Heart left ventricle (tissue), 16 donors: ENCODE measurements at regions of chr1 and their contacts with region 1.

Region 1: DNA sequence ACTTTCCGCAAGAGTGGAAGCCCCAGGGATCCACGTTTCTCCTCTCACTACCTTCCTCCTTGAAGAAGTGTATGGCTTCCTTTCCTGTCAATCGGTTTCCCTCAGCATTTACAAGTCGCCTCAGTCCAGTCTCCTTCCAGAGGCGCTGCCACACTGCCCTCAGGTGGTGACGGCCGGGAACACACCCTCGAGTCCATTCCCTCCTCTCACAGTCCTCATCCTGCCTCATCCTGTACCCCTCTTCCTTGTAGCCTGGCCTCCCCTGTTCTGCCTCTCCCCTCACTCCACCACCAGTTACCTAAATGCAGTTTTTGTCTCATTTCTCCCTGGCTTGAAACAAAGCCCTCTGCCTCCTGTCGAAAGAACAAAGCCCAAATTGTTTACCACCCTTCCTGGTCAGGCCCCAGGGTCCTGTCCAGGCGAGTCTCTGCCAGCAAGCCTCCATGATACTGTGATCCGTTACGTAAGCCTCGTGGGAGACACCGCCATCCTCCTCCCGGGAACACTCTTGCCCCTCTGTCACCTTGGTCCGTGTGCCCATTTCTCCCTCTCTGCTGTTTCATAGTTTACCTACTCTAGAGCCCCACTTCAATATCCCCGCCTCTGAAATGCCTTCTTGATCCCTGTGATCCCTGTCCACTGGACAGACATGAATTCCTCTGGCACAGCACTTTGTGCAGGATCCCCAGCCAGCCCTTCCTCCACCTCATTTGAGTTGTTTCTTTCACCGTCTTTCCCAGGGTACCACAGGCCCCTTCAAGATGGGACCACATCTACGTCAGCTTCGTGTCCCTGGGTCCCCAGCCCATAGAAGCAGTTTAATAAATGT is 23.3 kb upstream of the LSM10 start:
- DNase-seq: peak; percentile 76 to 90 (median 86)
- ATAC-seq: peak; percentile 74 to 95 (median 92)
- H3K4me3 ChIP-seq: no peak overlapping the region
- H3K27ac ChIP-seq: peak overlapping the region in 1 of 12 donors; percentile 33
- H3K4me1 ChIP-seq: peaks cover 0 to 21% (median 8%) of the 10 kb centered on the region in 12 donors
- H3K27me3 ChIP-seq: no peaks in the 10 kb centered on the region
- CTCF ChIP-seq: peak; percentile 86 to 98 (median 93)
- POLR2A ChIP-seq: no peak

Region 2: DNA sequence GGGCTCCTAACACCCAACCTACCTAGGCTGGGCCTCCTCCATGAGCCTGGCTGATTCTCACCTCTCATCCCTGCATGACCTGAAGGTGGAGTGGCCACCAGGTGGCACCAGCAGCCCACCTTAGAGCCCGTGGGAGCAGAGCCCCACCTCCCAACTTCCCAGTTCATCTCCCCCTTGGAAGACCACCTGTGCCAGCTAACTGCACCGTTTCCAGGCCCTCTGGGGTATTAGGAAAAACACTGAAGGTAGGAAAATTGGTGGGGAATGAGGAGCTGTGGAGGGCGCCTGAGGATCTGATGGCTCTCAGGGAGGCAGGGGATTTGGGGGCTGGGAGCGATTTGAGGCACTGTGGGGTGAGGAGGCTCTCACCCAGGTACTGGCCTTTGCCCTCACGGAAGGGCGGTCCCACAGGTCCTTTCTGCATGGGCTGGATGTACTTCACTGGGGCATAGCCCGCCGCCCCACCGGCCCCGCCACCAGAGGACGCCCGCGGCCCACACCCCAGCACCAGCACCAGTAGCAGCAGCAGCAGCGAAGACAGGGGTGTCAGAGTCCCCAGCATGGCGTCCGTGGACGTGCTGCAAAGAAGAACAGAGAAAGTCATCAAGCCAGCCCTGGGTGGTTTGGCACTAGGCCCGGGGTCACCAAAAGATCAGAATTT is 321.2 kb before region 1 on chr1:
- intact Hi-C with region 1: loop called (anchors 1 to 5 kb)
- DNase-seq: peak; percentile 69 to 89 (median 77)
- ATAC-seq: peak; percentile 80 to 88 (median 84)
- H3K4me3 ChIP-seq: peak overlapping the region in 1 of 12 donors; percentile 7
- H3K27ac ChIP-seq: no peak overlapping the region
- H3K4me1 ChIP-seq: peaks cover 0 to 26% (median 6%) of the 10 kb centered on the region in 12 donors
- H3K27me3 ChIP-seq: no peaks in the 10 kb centered on the region
- CTCF ChIP-seq: peak; percentile 66 to 93 (median 81)
- POLR2A ChIP-seq: no peak

Region 3: DNA sequence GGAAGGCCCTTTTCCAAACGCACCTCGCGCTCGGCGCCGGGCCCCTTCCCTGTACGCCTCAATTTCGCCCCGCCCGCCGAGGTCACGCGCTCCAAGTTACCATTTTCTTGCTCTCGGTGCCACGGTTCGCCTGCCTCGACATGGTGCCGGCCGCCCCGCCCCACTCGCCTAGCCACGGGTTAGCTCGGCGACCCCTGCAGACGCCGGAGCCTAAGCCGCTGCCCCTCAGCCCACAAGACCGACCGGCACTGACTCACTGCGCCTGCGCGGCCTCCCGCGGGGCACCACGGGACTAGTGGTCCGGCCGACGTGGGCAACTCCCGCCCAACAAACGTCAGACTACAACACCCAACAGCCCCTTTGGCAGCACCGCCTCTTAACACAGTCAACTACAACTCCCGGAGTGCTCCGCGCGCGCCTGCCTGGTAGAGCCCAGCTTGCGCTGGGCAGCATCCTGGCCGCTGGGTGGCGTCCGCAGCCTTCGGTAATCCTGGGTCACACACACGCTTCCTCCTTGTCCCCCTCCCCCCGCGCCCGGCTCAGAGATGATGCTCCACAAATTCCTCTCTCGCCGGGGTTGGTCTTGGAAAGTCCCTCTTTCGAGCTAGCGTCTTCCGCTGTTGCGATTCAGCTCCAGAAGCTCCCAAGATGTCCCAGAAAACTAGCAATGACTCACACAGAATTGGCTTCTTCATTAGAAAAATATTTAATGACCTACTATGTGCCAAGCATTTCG is 271.6 kb before region 1 on chr1 and contains the start of gene TRAPPC3:
- intact Hi-C with region 1: loop called in 1 of 10 experiments (anchors 2 kb)
- DNase-seq: peak; percentile 100
- ATAC-seq: peak; percentile 90 to 95 (median 92)
- H3K4me3 ChIP-seq: peak within 1 kb of the TSS; percentile 57 to 98 (median 84)
- H3K27ac ChIP-seq: peak within 1 kb of the TSS; percentile 90 to 99 (median 96)
- H3K4me1 ChIP-seq: peaks cover 7 to 62% (median 48%) of the 10 kb centered on the region in 12 donors
- H3K27me3 ChIP-seq: no peaks in the 10 kb centered on the region
- CTCF ChIP-seq: peak; percentile 88 to 100 (median 96)
- POLR2A ChIP-seq: peak in 1 of 2 donors; percentile 93
- total RNA-seq, gene TRAPPC3: 45.3 to 77.2 (median 52.9) TPM

Region 4: DNA sequence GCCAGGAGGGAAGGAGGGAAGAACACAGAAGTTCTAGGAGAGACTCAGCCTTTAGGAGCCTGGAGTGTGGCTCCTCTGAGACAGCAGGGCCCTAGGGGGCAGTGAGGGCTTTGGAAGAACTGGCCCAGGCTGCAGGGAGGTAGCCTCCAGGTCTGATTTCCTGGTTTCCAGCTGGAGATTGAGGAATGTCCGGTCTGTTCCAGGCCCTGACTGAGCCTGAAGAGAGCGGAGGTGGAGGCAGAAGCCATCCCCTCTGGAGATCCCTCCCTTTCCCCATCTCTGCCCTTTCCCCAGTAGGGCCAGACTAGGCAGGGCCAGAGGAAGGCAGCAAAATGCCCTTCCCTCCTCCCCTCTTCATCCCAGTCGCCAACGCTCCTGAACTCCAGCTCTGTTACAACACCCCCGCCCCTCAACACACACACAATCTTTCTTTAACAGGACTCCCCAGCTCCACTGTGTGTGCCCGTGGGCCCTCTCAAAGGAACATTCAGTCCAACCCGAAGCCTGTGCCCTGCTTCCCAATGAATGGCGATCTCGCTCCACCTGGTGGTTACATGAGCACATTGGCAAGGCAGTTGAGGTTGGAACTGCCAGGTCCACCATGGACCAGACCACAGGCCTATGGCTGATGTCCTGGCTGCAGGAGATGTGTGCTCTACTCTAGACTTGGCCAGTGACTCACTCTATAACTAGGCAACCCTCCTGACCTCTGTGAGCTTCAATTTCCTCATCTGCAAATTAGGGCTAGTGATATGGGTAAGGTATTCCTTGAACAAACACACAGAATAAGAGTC is 233.1 kb before region 1 on chr1:
- intact Hi-C with region 1: loop called in 1 of 10 experiments (anchors 5 kb)
- DNase-seq: peak; percentile 86 to 92 (median 88)
- ATAC-seq: peak; percentile 89 to 97 (median 94)
- H3K4me3 ChIP-seq: no peak overlapping the region
- H3K27ac ChIP-seq: peak overlapping the region; percentile 72 to 90 (median 84)
- H3K4me1 ChIP-seq: peaks cover 0 to 15% (median 9%) of the 10 kb centered on the region in 12 donors
- H3K27me3 ChIP-seq: no peaks in the 10 kb centered on the region
- CTCF ChIP-seq: peak; percentile 69 to 94 (median 88)
- POLR2A ChIP-seq: peak in 1 of 2 donors; percentile 36

Region 5: GRCh38 chr1:36306902-36307456 is 114.1 kb before region 1 on chr1:
- intact Hi-C with region 1: loop called in 1 of 10 experiments (anchors 5 kb)
- DNase-seq: peak; percentile 92 to 96 (median 94)
- ATAC-seq: peak; percentile 95 to 98 (median 98)
- H3K4me3 ChIP-seq: peak overlapping the region; percentile 63 to 95 (median 82)
- H3K27ac ChIP-seq: peak overlapping the region in 11 of 12 donors; percentile 65 to 87 (median 74)
- H3K4me1 ChIP-seq: peaks cover 0 to 24% (median 16%) of the 10 kb centered on the region in 12 donors
- H3K27me3 ChIP-seq: no peaks in the 10 kb centered on the region
- CTCF ChIP-seq: no peak
- POLR2A ChIP-seq: peak; percentile 61 to 90

Region 6: DNA sequence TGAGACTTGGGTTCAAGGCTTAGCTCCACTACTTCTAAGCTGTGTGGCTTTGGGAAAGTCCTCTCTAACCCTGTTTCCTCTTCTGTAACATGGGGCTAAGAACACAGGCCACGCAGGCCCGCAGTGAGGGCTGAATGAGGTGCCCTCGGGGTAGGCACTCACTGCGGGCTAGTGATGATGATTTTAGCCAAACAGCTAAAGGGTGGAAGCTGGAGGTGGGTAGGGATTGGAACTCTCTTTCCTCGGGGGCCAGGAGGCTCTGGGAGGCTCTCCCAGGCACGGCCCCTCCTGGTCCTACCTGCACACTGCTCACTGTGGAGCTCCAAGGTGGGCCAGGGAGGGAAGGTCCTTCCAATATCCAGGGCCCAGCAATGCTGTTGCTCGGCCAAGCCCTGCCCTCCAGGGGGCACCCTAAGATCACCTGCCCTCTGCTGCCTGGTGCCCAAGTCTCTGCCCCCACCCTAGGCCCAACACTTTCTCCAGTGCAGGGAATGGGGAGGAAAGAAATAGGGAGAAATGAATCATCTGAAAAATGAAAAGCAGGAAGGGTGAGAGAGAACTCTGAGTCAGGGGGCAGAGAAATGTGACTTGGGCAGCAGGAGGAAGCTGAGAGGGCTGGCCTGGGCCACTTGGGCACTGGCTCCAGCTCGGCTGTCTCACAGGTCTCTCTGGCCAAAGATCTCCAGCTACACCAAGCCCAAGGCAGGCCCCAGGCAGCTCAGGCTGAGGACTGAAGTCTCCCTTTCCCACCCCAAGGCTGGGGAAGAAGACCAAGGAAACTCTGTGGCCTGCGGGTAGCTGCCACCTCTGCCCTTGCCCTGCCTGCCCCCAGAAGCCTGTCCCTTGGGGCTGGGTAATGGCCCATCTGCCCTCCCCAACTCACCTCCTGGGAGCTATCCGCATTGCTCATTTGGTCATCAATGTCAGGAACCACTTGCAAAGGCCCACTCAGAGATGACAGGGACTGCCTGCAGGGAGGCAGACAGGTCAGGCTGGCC is 78.3 kb before region 1 on chr1:
- intact Hi-C with region 1: loop called (anchors 1 to 5 kb)
- DNase-seq: peak in 3 of 5 donors; percentile 53 to 75 (median 63)
- ATAC-seq: peak in 3 of 4 donors; percentile 65 to 80 (median 74)
- H3K4me3 ChIP-seq: no peak overlapping the region
- H3K27ac ChIP-seq: peak overlapping the region in 3 of 12 donors; percentile 20 to 70 (median 31)
- H3K4me1 ChIP-seq: peaks cover 0 to 36% (median 21%) of the 10 kb centered on the region in 12 donors
- H3K27me3 ChIP-seq: no peaks in the 10 kb centered on the region
- CTCF ChIP-seq: peak; percentile 60 to 78 (median 66)
- POLR2A ChIP-seq: no peak

Region 7: GRCh38 chr1:36384542-36385409 is 36.3 kb before region 1 on chr1:
- intact Hi-C with region 1: no loop called
- DNase-seq: peak in 4 of 5 donors; percentile 43 to 60 (median 54)
- ATAC-seq: no peak
- H3K4me3 ChIP-seq: peak overlapping the region; percentile 70 to 98 (median 91)
- H3K27ac ChIP-seq: peak overlapping the region; percentile 45 to 99 (median 97)
- H3K4me1 ChIP-seq: peaks cover 15 to 85% (median 68%) of the 10 kb centered on the region in 12 donors
- H3K27me3 ChIP-seq: no peaks in the 10 kb centered on the region
- CTCF ChIP-seq: no peak
- POLR2A ChIP-seq: no peak

Region 8: GRCh38 chr1:36486436-36487335 is 65.6 kb after region 1 on chr1:
- intact Hi-C with region 1: no loop called
- DNase-seq: peak in 4 of 5 donors; percentile 30 to 63 (median 56)
- ATAC-seq: peak; percentile 39 to 84 (median 69)
- H3K4me3 ChIP-seq: peak overlapping the region in 1 of 12 donors; percentile 7
- H3K27ac ChIP-seq: peak overlapping the region in 3 of 12 donors; percentile 21 to 85 (median 28)
- H3K4me1 ChIP-seq: peaks cover 0 to 40% (median under 1%) of the 10 kb centered on the region in 12 donors
- H3K27me3 ChIP-seq: peaks cover 0 to 8% (median 0%) of the 10 kb centered on the region in 9 donors
- CTCF ChIP-seq: no peak
- POLR2A ChIP-seq: no peak

Region 9: DNA sequence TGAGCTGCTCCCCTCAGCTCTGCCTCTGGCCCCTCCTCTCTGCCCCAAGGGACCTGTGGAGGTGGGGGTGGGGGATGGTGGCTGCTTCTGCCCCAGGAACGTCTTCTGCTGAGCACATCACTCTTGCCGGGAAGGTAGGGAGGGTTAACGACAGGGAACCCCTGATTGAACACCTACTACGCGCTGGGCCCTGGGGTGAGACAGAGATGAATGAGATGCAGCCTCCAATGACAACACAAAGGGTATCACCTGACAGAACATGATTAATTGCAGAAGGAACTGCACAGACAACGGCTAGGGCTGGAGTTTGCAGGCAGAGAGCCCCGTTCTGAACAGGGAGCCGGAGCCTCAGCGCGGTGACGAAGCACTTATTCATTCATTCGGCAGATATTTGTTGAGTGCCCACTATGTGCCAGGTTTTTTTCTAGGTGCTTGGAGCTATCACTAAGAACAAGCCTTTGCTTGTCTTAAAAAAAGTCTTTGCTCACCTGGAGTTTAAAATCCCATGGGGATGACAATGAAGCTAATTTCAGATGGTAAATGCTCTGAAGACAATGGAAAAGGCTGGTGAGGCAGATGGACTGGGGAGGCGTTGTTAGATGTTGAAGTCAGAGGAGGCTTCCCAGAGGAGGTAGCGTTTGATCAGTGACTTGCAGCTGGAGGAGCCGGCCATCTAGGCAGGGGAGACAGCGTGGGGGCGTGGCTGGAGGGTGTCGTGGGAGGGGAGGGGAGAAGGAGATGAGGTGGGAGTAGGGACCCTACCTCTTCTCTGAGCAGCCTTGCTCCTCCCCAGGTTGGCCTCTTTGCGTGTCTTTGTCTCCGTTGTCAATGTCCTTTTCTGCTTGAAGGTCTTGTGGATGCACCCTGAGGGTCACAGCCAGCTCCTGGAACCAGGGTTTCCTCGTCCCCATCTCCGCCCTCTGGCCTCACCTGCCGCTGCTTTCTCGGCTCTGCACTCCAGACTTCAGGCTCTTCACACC is 164.8 kb after region 1 on chr1:
- intact Hi-C with region 1: no loop called
- DNase-seq: no peak
- ATAC-seq: no peak
- H3K4me3 ChIP-seq: no peak overlapping the region
- H3K27ac ChIP-seq: no peak overlapping the region
- H3K4me1 ChIP-seq: no peaks in the 10 kb centered on the region
- H3K27me3 ChIP-seq: peaks cover 0 to 88% (median 43%) of the 10 kb centered on the region in 9 donors
- CTCF ChIP-seq: no peak
- POLR2A ChIP-seq: no peak